ENCODE measurements at regions of chr1 and their contacts with region 1.

Region 1: GRCh38 chr1:34852677-34853217 is 6.8 kb downstream of the SMIM12 start:
- DNase-seq: peak; percentile 75 to 91 (median 89)
- ATAC-seq: peak; percentile 100
- H3K4me3 ChIP-seq: no peak overlapping the region
- H3K4me3 Mint-ChIP-seq: peak overlapping the region in 1 of 10 donors; percentile 7
- H3K27ac ChIP-seq: peak overlapping the region; percentile 9
- H3K27ac Mint-ChIP-seq: peak overlapping the region; percentile 6 to 83 (median 53)
- H3K4me1 ChIP-seq: peaks cover 2 to 5% of the 10 kb centered on the region in 2 donors
- H3K4me1 Mint-ChIP-seq: peaks cover 29 to 47% (median 34%) of the 10 kb centered on the region in 7 donors
- H3K27me3 ChIP-seq: no peaks in the 10 kb centered on the region
- H3K27me3 Mint-ChIP-seq: no peaks in the 10 kb centered on the region

Region 2: DNA sequence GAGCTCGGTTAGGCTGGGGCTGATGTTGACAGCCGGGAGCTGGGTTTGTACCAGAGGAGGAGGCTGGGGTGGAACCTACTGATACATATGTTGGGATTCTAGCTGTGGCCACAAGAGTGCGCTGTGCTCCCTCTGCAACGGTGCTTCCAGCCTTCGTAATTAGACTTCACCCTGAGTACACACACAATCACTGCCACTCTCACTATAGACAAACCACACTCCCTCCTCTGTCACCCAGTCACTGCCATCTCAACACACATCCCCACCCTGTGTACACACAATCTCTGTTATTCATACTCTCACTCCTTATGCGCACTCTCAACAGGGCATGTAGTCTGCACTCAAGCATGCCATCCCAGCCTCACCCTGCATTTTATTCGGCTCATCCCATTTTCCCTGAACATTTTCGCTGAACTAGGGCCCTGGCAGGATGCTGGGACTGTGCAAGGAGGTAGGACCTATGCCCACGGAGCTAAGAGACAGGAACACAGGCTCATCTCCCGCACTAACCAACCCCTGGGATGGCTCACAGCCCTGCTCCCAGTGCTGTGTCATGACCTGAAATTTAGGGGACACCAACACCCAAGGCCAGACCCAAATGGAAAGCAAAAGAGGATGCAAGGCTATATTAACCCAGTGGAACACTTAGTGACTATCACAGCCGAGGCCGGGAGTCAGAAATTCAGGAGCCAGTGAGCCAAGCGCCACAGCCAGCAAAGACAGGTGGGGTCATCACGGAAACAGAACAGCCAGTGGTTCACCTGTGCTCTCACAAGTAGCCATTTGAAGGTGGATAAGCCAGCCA is 66.0 kb before region 1 on chr1:
- CTCF ChIA-PET with region 1: interaction called, 4 read pairs
- POLR2A ChIA-PET with region 1: no interaction called
- intact Hi-C with region 1: loop called (anchors 1 kb)
- DNase-seq: peak; percentile 28 to 59 (median 47)
- ATAC-seq: peak; percentile 88
- H3K4me3 ChIP-seq: no peak overlapping the region
- H3K4me3 Mint-ChIP-seq: no peak overlapping the region
- H3K27ac ChIP-seq: no peak overlapping the region
- H3K27ac Mint-ChIP-seq: no peak overlapping the region
- H3K4me1 ChIP-seq: no peaks in the 10 kb centered on the region
- H3K4me1 Mint-ChIP-seq: peaks cover 0 to 14% (median 3%) of the 10 kb centered on the region in 7 donors
- H3K27me3 ChIP-seq: no peaks in the 10 kb centered on the region
- H3K27me3 Mint-ChIP-seq: peaks cover 19 to 54% (median 43%) of the 10 kb centered on the region in 5 donors

Region 3: DNA sequence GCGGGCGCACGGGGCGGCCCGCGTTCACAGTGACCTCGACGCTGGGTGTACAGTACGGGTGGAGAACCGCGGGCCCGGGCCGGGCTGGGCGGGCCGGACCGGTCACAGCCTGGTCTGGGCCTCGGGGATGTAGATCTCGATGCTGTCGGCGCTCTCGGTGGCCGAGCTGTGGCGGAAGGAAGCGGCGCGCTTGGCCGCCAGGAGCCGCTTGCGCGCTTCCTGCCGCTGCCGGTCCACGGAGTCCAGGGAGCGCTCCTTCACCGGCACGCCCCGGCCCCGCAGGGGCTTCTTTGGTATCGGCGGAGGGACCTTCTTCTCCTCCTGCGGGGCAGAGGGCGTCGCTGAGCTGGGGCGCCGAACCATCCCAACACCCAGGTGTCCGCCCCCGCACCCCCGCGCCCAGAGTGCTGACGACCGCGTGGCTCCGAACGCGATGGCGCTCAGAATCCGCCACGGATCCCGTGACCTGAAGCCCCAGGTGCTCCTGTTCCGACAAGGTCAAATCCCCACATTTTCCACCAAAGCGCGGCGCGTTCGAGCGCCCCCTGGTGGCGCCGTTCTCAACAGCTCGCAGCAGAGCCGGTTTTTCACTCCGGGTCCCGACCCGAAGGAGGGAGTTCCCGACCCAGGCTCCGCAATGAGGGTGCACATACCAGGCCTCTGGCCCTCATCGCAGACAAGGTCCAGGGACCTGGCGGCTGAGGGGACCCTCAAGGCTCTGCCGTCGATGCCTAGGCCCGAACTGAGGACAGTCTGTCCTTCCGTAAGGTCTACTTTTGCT is 13.4 kb after region 1 on chr1:
- CTCF ChIA-PET with region 1: interaction called, 50 read pairs
- POLR2A ChIA-PET with region 1: interaction called, 7 read pairs
- intact Hi-C with region 1: loop called (anchors 1 kb)
- DNase-seq: peak; percentile 87 to 97 (median 90)
- ATAC-seq: peak; percentile 92
- H3K4me3 ChIP-seq: peak overlapping the region; percentile 66
- H3K4me3 Mint-ChIP-seq: peak overlapping the region; percentile 82 to 92 (median 86)
- H3K27ac ChIP-seq: peak overlapping the region; percentile 83
- H3K27ac Mint-ChIP-seq: peak overlapping the region; percentile 80 to 92 (median 88)
- H3K4me1 ChIP-seq: peaks cover 19 to 22% of the 10 kb centered on the region in 2 donors
- H3K4me1 Mint-ChIP-seq: peaks cover 28 to 54% (median 44%) of the 10 kb centered on the region in 7 donors
- H3K27me3 ChIP-seq: no peaks in the 10 kb centered on the region
- H3K27me3 Mint-ChIP-seq: peaks cover 0 to 6% (median under 1%) of the 10 kb centered on the region in 5 donors

Region 4: DNA sequence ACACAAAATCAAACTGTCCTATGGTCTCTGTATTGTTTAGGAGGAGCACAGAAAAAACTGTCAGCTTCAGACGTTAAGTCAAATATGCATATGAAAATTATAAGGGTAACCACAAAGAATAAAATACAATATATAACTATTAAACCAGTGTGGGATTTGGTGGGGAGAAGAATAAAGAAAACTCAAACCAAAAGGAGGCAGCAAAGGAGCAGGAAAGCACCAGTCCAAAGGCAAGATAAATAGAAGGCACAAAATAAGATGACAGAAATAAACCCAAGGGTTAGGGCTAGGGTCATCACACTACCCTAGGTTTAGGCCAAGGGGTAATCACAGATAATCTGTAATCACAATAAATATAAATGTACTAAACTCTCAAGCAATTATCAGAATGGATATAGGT is 43.9 kb after region 1 on chr1:
- CTCF ChIA-PET with region 1: no interaction called
- POLR2A ChIA-PET with region 1: no interaction called
- intact Hi-C with region 1: no loop called
- DNase-seq: no peak
- ATAC-seq: no peak
- H3K4me3 ChIP-seq: no peak overlapping the region
- H3K4me3 Mint-ChIP-seq: no peak overlapping the region
- H3K27ac ChIP-seq: no peak overlapping the region
- H3K27ac Mint-ChIP-seq: no peak overlapping the region
- H3K4me1 ChIP-seq: no peaks in the 10 kb centered on the region
- H3K4me1 Mint-ChIP-seq: peaks cover 0 to 8% (median 0%) of the 10 kb centered on the region in 7 donors
- H3K27me3 ChIP-seq: no peaks in the 10 kb centered on the region
- H3K27me3 Mint-ChIP-seq: peaks cover 7 to 22% (median 18%) of the 10 kb centered on the region in 5 donors

Region 5: GRCh38 chr1:35298464-35298863 is 445.7 kb after region 1 on chr1:
- CTCF ChIA-PET with region 1: no interaction called
- POLR2A ChIA-PET with region 1: no interaction called
- intact Hi-C with region 1: loop called (anchors 1 to 10 kb)
- DNase-seq: peak in 7 of 9 donors; percentile 43 to 68 (median 60)
- ATAC-seq: peak; percentile 92
- H3K4me3 ChIP-seq: no peak overlapping the region
- H3K4me3 Mint-ChIP-seq: no peak overlapping the region
- H3K27ac ChIP-seq: no peak overlapping the region
- H3K27ac Mint-ChIP-seq: peak overlapping the region in 5 of 9 donors; percentile 26 to 72 (median 62)
- H3K4me1 ChIP-seq: no peaks in the 10 kb centered on the region
- H3K4me1 Mint-ChIP-seq: peaks cover 6 to 26% (median 14%) of the 10 kb centered on the region in 7 donors
- H3K27me3 ChIP-seq: no peaks in the 10 kb centered on the region
- H3K27me3 Mint-ChIP-seq: no peaks in the 10 kb centered on the region

Region 6: DNA sequence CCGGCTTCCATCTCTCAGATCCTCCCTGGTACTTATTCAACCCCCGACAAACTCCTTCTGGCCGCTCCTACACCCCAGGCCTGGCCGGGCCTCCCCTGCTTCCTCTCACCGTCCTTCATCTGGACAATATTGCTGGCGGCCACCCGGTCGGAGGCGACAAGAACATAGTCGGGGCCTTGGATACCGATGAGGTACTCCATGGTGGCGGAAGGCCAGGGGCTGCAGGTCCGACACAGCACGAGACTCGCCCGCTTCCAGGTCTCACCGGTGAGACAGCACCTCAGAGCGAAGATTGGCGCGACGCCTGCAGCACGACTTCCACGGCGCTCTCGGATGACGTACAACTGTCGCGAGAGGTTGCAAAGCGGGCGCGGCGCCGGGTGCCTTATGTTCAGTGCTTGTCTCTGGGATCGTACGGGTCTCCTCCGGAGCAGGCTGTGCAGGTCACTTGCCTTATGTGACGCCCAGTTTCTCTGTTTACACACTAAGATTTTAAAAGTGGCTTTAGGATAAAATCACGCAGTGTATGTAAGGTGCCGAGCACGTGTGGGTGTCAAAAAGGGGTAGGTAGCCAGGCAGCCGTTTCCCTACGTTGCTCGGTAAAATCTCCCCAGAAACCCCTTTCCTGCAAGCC is 788.6 kb after region 1 on chr1 and contains the start of gene PSMB2:
- CTCF ChIA-PET with region 1: no interaction called
- POLR2A ChIA-PET with region 1: no interaction called
- intact Hi-C with region 1: loop called in 1 of 2 experiments (anchors 10 kb)
- DNase-seq: peak; percentile 89 to 96 (median 95)
- ATAC-seq: peak; percentile 97
- H3K4me3 ChIP-seq: peak within 1 kb of the TSS; percentile 89
- H3K4me3 Mint-ChIP-seq: peak within 1 kb of the TSS; percentile 97 to 100 (median 100)
- H3K27ac ChIP-seq: peak within 1 kb of the TSS; percentile 92
- H3K27ac Mint-ChIP-seq: peak within 1 kb of the TSS; percentile 98 to 100 (median 99)
- H3K4me1 ChIP-seq: peaks cover 18 to 19% of the 10 kb centered on the region in 2 donors
- H3K4me1 Mint-ChIP-seq: peaks cover 16 to 54% (median 42%) of the 10 kb centered on the region in 7 donors
- H3K27me3 ChIP-seq: no peaks in the 10 kb centered on the region
- H3K27me3 Mint-ChIP-seq: peaks cover 12 to 44% (median 30%) of the 10 kb centered on the region in 5 donors
- total RNA-seq, gene PSMB2: 20.4 to 93.5 (median 23.5) TPM